GM23248 (cell line): ENCODE measurements at regions of chr15 and their contacts with region 1.

Region 1: GRCh38 chr15:29749365-29750086 is 72.7 kb downstream of the TJP1 start:
- DNase-seq: no peak
- H3K4me3 ChIP-seq: no peak overlapping the region
- H3K27ac ChIP-seq: no peak overlapping the region
- H3K4me1 ChIP-seq: peaks cover 8% of the 10 kb centered on the region
- H3K27me3 ChIP-seq: no peaks in the 10 kb centered on the region

Region 2: DNA sequence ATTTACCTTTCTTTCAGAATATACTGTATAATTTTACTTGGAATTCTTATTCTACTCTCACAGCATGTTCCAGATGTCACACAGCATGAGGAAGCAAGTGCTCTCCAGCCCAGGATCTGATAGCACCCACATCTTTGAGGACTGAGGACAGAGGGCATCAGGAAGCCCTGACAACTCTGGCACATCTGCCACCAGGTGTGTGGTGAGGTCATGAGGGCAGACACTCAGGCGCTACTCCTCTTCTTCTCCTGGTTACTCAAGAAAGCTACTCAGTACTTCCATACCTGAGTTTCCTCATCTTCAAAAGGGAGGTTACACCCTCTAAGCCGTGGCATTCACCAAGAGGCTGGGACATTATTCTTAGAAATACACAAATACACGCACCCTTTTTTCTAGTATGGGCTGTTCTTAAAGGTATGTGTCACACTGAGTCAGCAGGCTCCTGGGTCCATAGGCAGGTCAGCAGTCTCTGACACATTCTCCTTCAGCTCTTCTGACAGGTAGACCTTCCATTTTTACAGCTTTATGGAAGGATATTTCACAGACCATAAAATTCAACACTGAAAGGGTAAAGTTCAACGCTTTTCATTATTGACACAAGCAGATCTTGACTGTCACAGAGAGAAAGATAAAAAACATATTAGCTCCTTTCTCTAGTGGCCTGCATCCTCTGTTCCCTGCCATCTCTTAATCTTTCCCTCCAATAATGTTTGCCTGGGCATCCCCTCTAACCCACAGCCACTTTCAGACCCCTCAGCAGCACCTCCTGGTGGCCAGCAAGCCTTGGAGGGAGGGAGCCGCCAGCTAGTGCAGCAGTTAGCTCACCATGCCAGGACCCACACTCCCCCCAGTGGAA is 175.9 kb after region 1 on chr15:
- in situ Hi-C with region 1: loop called (anchors 10 kb)
- DNase-seq: peak; percentile 80
- H3K4me3 ChIP-seq: no peak overlapping the region
- H3K27ac ChIP-seq: peak overlapping the region; percentile 6; the same call in 1 of the 2 replicates
- H3K4me1 ChIP-seq: peaks cover 28% of the 10 kb centered on the region
- H3K27me3 ChIP-seq: no peaks in the 10 kb centered on the region